H1 (cell line): ENCODE measurements at regions of chr5 and their contacts with region 1.

Region 1: GRCh38 chr5:172984243-172984953 is 827 bp downstream of the ATP6V0E1 start:
- DNase-seq: peak; percentile 38 to 62
- H3K4me3 ChIP-seq: peak overlapping the region; percentile 77 to 92 (median 88)
- H3K27ac ChIP-seq: peak overlapping the region; percentile 80
- H3K4me1 ChIP-seq: peaks cover 0 to 2% (median 0%) of the 10 kb centered on the region in 4 experiments; a peak in 4 of 7 replicates
- H3K27me3 ChIP-seq: no peaks in the 10 kb centered on the region
- CTCF ChIP-seq: peak; percentile 47 to 53 (median 52)
- EP300 ChIP-seq: no peak
- POLR2A ChIP-seq: peak in 1 of 2 experiments; percentile 50
- RAD21 ChIP-seq: peak; percentile 56 to 69

Region 2: DNA sequence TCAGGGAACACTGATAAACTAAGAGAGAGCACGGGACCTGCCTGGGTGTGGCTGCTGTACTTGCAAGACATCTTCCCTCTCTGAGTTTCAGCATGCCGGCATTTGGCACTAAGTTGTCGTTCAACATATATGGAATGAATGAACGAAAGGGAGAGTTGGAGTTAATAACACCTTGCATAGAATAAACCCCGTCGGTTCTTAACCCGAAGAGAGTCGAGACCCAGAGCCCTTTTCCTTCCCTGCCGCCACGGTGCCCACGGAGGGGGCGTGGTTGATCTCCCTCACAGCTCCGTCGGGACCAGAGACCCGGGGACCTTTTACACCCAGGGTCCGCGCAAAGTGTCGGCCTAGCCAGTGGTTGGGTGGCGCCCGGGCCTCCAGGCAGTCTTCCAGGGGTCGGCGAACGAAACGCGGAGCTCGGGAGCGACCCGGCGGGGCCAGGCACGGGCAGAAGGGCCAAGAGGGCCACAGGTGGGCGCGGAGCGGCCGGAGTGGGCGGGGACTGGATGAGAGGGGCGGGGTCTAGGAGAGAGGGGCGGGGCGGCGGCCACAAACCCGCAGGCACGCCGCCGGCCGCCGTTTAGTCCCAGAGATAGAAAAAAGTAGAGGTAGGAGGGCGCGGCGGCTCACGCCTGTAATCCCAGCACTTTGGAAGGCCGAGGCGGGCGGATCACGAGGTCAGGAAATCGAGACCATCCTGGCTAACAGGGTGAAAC is 25.9 kb before region 1 on chr5:
- CTCF ChIA-PET with region 1: interaction called, 3 read pairs
- POLR2A ChIA-PET with region 1: interaction called, 12 read pairs
- DNase-seq: peak; percentile 33 to 84
- H3K4me3 ChIP-seq: peak overlapping the region; percentile 87 to 100 (median 93)
- H3K27ac ChIP-seq: no peak overlapping the region
- H3K4me1 ChIP-seq: peaks cover 0 to 7% (median 0%) of the 10 kb centered on the region in 4 experiments; a peak in 4 of 7 replicates
- H3K27me3 ChIP-seq: peaks cover 0 to 9% (median 3%) of the 10 kb centered on the region in 4 experiments; a peak in 3 of 7 replicates
- CTCF ChIP-seq: no peak
- EP300 ChIP-seq: no peak
- POLR2A ChIP-seq: no peak
- RAD21 ChIP-seq: no peak; a peak in 1 of 4 replicates

Region 3: DNA sequence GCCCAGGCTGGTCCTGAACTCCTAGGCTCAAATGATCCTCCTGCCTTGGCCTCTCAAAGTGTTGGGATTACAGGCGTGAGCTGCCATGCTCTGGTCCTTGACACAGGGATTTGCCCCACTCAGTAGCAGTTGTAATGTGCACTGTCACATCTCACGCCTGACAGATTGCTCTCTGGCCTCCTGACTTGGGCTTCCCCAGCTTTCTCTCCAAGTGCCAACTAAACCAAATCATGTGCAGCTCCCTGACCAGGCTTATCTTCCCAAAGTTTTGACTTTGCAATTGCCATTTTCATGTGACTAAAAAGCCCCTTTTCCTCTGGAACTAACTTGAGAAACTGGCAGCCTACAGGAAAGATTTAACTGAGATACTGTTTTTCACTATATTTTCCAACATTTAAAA is 14.5 kb before region 1 on chr5:
- CTCF ChIA-PET with region 1: interaction called, 33 read pairs
- POLR2A ChIA-PET with region 1: interaction called, 7 read pairs
- DNase-seq: no peak
- H3K4me3 ChIP-seq: no peak overlapping the region
- H3K27ac ChIP-seq: no peak overlapping the region
- H3K4me1 ChIP-seq: no peaks in the 10 kb centered on the region
- H3K27me3 ChIP-seq: no peaks in the 10 kb centered on the region
- CTCF ChIP-seq: no peak
- EP300 ChIP-seq: no peak
- POLR2A ChIP-seq: no peak
- RAD21 ChIP-seq: no peak

Region 4: GRCh38 chr5:172994405-172994804 is 10.0 kb after region 1 on chr5:
- CTCF ChIA-PET with region 1: interaction called, 9 read pairs
- POLR2A ChIA-PET with region 1: interaction called, 10 read pairs
- DNase-seq: no peak
- H3K4me3 ChIP-seq: no peak overlapping the region
- H3K27ac ChIP-seq: no peak overlapping the region
- H3K4me1 ChIP-seq: no peaks in the 10 kb centered on the region
- H3K27me3 ChIP-seq: no peaks in the 10 kb centered on the region
- CTCF ChIP-seq: no peak
- EP300 ChIP-seq: no peak
- POLR2A ChIP-seq: no peak
- RAD21 ChIP-seq: no peak